WTC11 (cell line): ENCODE measurements at regions of chr10 and their contacts with region 1.

Region 1: GRCh38 chr10:124497196-124497881 is 35.7 kb downstream of the LHPP start:
- DNase-seq: no peak
- ATAC-seq: no peak
- H3K4me3 Mint-ChIP-seq: no peak overlapping the region
- H3K27ac Mint-ChIP-seq: no peak overlapping the region
- H3K4me1 Mint-ChIP-seq: peaks cover 38% of the 10 kb centered on the region
- H3K27me3 Mint-ChIP-seq: no peaks in the 10 kb centered on the region
- CTCF ChIP-seq: no peak

Region 2: GRCh38 chr10:124545351-124546054 is 48.2 kb after region 1 on chr10:
- CTCF ChIA-PET with region 1: no interaction called
- POLR2A ChIA-PET with region 1: interaction called, 11 read pairs
- DNase-seq: no peak
- ATAC-seq: no peak
- H3K4me3 Mint-ChIP-seq: no peak overlapping the region
- H3K27ac Mint-ChIP-seq: no peak overlapping the region
- H3K4me1 Mint-ChIP-seq: no peaks in the 10 kb centered on the region
- H3K27me3 Mint-ChIP-seq: no peaks in the 10 kb centered on the region
- CTCF ChIP-seq: no peak